Mammary epithelial cell (primary cell): ENCODE measurements at regions of chr6 and their contacts with region 1.

Region 1: DNA sequence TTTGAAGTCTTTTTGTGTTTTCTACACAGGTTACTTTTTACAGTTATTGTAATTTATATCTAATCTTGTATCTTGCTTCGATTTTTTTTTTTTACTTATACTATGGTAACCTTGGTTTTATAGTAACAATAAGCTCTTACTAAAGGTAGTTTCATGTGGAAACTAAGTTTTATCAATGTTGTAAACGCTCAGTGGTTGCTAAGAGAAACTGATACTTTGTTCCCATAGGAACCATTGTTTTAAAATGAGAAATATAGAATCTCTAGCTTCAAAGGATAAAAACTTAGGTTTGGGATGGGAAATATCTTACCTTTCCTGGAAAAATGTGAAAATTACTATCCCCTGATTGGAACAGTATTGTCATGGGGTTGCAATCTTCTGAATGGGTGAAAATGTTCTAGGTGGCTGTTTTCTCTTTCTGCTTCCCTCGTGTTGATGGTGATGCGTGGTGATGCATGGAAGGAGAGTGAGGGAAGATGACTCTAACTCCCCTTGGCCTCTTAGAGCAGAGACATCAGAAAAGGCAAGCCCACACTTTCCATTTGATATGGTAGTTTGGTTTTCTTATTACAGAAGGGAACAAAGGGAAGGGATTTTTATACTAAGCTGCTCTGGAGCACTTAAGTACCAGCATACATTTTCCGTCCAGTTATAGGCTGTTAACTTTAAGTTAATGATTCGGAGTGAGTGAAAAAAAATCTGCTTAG is 23.5 kb upstream of the BACH2 start:
- DNase-seq: no peak
- H3K4me3 ChIP-seq: no peak overlapping the region
- H3K27ac ChIP-seq: no peak overlapping the region
- H3K4me1 ChIP-seq: no peaks in the 10 kb centered on the region
- H3K27me3 ChIP-seq: peaks cover 2% of the 10 kb centered on the region
- CTCF ChIP-seq: no peak

Region 2: DNA sequence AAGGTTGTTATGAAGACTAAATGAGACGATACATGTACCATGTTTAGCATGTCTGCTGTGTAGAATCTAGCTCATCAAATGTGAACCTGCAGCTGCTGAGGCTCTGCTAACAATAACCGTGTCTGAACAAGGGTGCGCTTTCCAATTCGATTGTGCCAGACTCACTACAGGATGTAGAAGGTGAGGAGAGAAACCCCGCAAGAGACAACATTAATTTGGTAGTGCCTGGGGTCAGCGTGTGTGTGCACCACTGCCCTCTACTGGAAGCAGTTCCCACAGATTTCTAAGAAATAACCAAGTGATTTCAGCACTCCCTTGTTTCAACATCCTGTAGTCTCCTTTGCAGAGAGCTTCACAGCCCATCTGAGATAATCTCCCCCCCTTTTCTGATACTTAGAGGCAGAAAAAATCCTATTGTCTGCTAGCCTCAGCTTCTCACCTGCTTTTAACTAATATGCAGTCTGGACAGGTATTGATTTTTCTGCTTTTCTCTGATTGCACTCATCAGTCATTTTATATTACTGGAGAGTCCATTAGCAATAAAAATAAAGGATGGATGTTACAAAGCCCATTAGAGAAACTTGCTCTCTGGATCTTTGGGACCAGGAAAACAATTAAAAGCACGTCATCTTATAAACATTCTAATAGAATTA is 73.2 kb after region 1 on chr6:
- CTCF ChIA-PET with region 1: no interaction called
- dilution Hi-C with region 1: loop called (anchors 5 kb)
- in situ Hi-C with region 1: no loop called
- intact Hi-C with region 1: no loop called
- DNase-seq: peak; percentile 57
- H3K4me3 ChIP-seq: no peak overlapping the region
- H3K27ac ChIP-seq: no peak overlapping the region
- H3K4me1 ChIP-seq: no peaks in the 10 kb centered on the region
- H3K27me3 ChIP-seq: no peaks in the 10 kb centered on the region
- CTCF ChIP-seq: peak; percentile 75 to 80

Region 3: DNA sequence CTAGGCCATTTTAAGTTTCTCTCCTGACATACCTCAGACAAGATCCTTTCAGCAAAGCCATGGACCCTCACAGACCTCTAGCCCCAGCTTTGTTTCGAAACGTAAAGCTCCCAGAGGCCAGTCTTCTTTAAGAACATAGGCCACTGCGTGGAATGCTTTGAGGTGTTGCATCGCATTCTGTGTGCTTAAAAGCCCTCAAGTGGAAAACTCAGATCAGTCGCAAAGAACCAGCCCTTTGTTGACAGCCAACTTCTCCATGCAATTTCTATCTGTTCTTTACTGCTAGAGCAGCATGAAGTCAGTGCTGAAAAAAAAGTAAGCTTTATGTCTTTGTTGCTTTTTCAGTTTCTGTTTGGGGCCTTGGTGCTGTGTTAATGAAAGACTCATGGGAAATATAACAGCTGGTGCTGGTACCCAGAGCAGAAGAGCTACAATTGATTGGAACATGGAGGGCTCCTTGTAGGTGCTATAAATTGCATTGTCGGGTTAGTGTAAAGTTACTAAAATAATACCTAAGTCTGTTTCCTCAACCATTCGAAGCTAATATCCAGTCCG is 124.1 kb after region 1 on chr6:
- CTCF ChIA-PET with region 1: no interaction called
- dilution Hi-C with region 1: no loop called
- in situ Hi-C with region 1: no loop called
- intact Hi-C with region 1: no loop called
- DNase-seq: no peak
- H3K4me3 ChIP-seq: no peak overlapping the region
- H3K27ac ChIP-seq: no peak overlapping the region
- H3K4me1 ChIP-seq: no peaks in the 10 kb centered on the region
- H3K27me3 ChIP-seq: no peaks in the 10 kb centered on the region
- CTCF ChIP-seq: no peak